CD14-positive monocyte (primary cell): ENCODE measurements at regions of chr17 and their contacts with region 1.

Region 1: GRCh38 chr17:5419356-5419958 is at the start of gene NUP88:
- DNase-seq: peak; percentile 81 to 94 (median 93)
- H3K4me3 ChIP-seq: peak within 1 kb of the TSS; percentile 60 to 90 (median 87)
- H3K4me3 Mint-ChIP-seq: peak within 1 kb of the TSS; percentile 98 to 99
- H3K27ac ChIP-seq: peak within 1 kb of the TSS; percentile 85 to 89
- H3K27ac Mint-ChIP-seq: peak within 1 kb of the TSS; percentile 88 to 97 (median 95)
- H3K4me1 ChIP-seq: peaks cover 15 to 20% of the 10 kb centered on the region in 2 donors
- H3K4me1 Mint-ChIP-seq: peaks cover 23% of the 10 kb centered on the region
- H3K27me3 ChIP-seq: no peaks in the 10 kb centered on the region
- H3K27me3 Mint-ChIP-seq: peaks cover 0 to 2% (median 2%) of the 10 kb centered on the region in 3 donors
- CTCF ChIP-seq: no peak
- polyA plus RNA-seq, gene NUP88: 23.1 to 45.7 (median 36.1) TPM

Region 2: DNA sequence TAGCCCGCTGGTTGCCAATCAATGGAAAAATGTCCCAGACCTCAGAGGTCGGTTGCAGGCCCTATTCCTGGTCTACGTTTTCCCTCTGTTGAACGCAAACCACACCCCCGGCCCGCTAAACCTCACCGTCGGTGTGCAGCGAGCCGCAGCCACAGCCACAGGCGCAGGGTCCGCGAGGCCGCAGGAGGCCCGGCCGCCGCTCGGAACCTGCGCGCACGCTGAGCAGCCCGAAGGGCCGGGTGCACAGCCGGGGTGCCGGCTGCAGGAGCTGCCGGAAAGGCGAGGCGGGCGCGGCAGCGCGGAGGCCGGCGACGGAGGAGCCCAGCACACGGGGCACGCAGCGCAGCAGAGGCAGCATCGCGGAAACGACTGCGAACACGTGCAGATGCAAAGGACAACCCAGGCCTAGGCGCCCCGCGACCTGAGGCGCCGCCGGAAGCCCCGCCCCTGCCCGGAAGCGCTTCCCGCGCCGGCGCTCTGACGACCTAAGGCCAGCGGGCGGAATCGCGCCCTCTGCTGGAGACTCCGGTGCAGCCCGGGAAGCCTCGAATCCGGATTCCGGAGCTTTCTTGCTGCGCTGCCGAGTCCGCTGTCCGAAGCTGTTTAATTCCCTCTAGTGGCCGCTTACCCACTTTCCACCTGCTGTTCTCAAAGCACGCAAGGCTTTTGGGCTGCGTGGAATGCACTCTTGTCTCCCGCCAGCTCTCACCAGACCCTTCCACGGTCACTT is 19.4 kb after region 1 on chr17 and contains the start of gene C1QBP:
- intact Hi-C with region 1: loop called in 1 of 2 experiments (anchors 2 kb)
- DNase-seq: peak; percentile 92 to 95 (median 93)
- H3K4me3 ChIP-seq: peak within 1 kb of the TSS; percentile 60 to 94 (median 70)
- H3K4me3 Mint-ChIP-seq: peak within 1 kb of the TSS; percentile 74 to 84
- H3K27ac ChIP-seq: peak within 1 kb of the TSS; percentile 59 to 79
- H3K27ac Mint-ChIP-seq: peak within 1 kb of the TSS; percentile 62 to 92 (median 85)
- H3K4me1 ChIP-seq: peaks cover 18 to 22% of the 10 kb centered on the region in 2 donors
- H3K4me1 Mint-ChIP-seq: peaks cover 27% of the 10 kb centered on the region
- H3K27me3 ChIP-seq: no peaks in the 10 kb centered on the region
- H3K27me3 Mint-ChIP-seq: peaks cover 0 to 1% (median 0%) of the 10 kb centered on the region in 3 donors
- CTCF ChIP-seq: peak; percentile 99
- polyA plus RNA-seq, gene C1QBP: 32.7 to 169 (median 122) TPM